ENCODE measurements at regions of chr2 and their contacts with region 1.

Region 1: GRCh38 chr2:218898109-218898878 is 17.6 kb downstream of the WNT10A start:
- DNase-seq: peak; percentile 74
- H3K4me3 Mint-ChIP-seq: peak overlapping the region; percentile 68
- H3K27ac Mint-ChIP-seq: peak overlapping the region; percentile 68
- H3K4me1 Mint-ChIP-seq: peaks cover 33% of the 10 kb centered on the region
- H3K27me3 Mint-ChIP-seq: peaks cover 47% of the 10 kb centered on the region

Region 2: DNA sequence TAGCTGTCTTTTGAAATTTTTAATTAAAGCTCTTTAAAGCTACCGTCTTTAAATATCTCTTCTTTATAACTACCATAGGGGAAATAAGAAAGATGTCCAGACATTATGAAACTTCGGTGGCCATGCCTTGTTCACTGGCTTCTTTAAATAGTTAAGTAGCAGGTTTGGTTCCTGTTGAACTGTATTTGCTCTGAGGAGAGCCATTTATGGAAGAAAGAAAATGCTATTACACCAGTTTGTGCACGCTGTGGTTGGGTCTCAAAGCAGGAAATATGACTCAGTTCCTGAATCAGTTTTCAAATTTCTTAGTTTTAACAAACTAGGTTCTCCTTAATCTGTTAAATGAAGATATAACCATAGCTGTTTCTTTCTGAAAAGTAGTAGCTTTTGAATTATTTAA is 669.1 kb before region 1 on chr2:
- intact Hi-C with region 1: loop called (anchors 5 kb)
- DNase-seq: peak; percentile 38
- H3K4me3 Mint-ChIP-seq: peak overlapping the region; percentile 47
- H3K27ac Mint-ChIP-seq: peak overlapping the region; percentile 85
- H3K4me1 Mint-ChIP-seq: peaks cover 59% of the 10 kb centered on the region
- H3K27me3 Mint-ChIP-seq: no peaks in the 10 kb centered on the region

Region 3: GRCh38 chr2:218659258-218659987 is 238.9 kb before region 1 on chr2 and contains the starts of genes BCS1L and ZNF142:
- intact Hi-C with region 1: loop called (anchors 5 kb)
- DNase-seq: peak; percentile 92
- H3K4me3 Mint-ChIP-seq: peak within 1 kb of the TSS; percentile 91
- H3K27ac Mint-ChIP-seq: peak within 1 kb of the TSS; percentile 82
- H3K4me1 Mint-ChIP-seq: peaks cover 25% of the 10 kb centered on the region
- H3K27me3 Mint-ChIP-seq: no peaks in the 10 kb centered on the region
- total RNA-seq, gene BCS1L: 77.3 and 83.1 TPM in 2 replicates
- total RNA-seq, gene ZNF142: 48.7 and 51.0 TPM in 2 replicates

Region 4: GRCh38 chr2:218832520-218832919 is 65.8 kb before region 1 on chr2:
- intact Hi-C with region 1: no loop called
- DNase-seq: no peak
- H3K4me3 Mint-ChIP-seq: no peak overlapping the region
- H3K27ac Mint-ChIP-seq: no peak overlapping the region
- H3K4me1 Mint-ChIP-seq: no peaks in the 10 kb centered on the region
- H3K27me3 Mint-ChIP-seq: peaks cover 28% of the 10 kb centered on the region

Region 5: DNA sequence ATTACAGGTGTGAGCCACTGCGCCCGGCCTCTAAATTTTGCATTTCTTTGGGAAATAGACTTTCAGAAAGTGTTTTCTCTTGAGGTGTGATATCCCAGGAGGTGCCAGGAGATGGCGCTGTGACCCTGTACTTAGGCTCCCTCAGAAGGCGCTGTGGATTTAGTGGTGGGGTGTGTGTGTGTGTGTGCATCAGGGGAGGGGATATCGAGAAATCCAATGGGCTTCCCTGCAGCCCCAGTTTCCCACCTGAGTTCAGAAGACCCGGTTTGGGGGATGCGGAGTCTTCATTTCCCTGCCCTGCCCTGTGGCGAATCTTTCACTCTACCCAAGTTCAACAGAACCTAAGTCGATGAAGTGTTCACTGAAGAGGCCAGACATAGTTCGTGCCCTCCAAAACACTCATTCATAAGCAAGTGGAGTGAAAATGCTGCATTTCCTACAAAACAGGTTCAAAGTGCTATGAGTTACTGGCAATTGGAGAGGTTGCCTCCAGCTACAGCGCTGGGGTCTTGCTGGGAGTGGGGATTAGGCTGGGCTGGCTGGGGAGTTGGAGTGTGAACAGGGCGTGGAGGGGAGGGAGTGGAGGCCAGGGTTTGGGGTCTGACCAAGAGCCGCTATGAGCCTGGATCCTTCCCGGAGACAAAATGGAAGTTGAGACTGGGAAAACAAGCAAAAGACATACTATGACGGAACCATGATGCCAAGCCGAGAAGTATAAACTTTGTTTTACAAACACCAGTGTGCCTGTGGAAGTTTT is 45.2 kb before region 1 on chr2:
- intact Hi-C with region 1: loop called (anchors 1 kb)
- DNase-seq: peak; percentile 31
- H3K4me3 Mint-ChIP-seq: no peak overlapping the region
- H3K27ac Mint-ChIP-seq: no peak overlapping the region
- H3K4me1 Mint-ChIP-seq: peaks cover 7% of the 10 kb centered on the region
- H3K27me3 Mint-ChIP-seq: peaks cover 55% of the 10 kb centered on the region

Region 6: DNA sequence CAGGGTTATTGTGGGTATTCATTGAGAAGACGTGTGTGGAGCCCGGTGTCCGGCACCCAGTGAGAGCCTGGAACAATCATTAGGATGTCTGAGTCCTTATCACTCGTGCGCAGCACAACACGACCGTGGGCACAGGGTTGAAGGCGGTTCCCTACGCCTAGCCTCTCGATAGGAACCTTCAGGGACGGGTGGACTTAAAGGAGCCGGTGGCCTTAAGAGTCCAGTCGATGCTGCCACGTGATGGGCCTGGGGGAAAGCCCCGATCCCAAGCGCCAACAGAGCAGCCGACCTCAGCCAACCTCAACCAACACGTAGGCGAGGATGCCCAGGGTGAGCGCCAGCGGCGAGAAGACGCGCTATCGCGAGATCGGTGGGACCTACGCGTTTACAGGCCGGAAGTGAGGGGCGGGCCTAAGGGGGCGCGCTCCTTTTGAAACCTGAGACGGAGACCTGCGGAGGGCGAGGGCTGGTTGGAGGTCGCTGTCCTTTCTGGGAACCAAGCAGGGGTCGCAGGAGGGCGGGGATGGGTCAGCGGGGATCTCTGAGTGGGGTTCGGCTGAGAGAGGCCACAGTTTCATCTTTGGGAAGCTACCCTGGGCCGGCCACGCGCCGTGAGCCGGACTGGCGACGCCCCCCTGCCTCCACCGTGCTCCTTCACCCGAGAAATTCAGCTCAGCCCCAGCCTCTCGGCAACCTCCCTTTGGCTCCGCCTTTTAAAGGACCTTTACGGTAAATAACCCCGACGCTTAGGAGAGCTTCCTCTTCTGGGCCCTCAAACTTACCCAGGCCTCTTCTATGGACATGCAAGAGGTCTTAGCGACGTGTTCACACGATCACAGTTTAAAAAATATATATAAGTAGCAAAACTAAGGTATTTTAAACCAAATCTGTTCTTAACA is 10.7 kb after region 1 on chr2:
- intact Hi-C with region 1: loop called (anchors 1 kb)
- DNase-seq: peak; percentile 83
- H3K4me3 Mint-ChIP-seq: peak overlapping the region; percentile 80
- H3K27ac Mint-ChIP-seq: peak overlapping the region; percentile 76
- H3K4me1 Mint-ChIP-seq: peaks cover 13% of the 10 kb centered on the region
- H3K27me3 Mint-ChIP-seq: peaks cover 23% of the 10 kb centered on the region